ENCODE measurements at regions of chr11 and their contacts with region 1.

Region 1: DNA sequence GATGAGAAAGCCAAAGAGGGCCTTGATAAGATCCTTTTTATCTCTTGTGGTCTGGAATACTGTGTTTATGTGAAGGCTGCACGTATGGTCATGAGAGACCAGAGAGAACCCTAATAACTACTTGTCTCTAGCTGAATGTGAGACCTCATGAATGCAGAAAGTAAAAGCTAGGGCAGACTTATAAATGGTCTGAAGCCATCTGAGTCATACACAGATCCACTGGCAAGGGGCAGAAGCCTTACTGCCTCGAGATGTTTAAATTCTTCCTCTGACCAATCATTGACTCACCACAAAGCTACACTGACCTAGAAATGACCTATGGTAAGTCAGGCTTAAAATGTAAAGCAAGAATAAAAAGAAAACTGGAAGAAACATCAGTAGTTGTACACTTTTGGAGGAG is 22.7 kb upstream of the OR4B1 start:
- DNase-seq: no peak
- ATAC-seq: no peak
- H3K4me3 ChIP-seq: no peak overlapping the region
- H3K27ac ChIP-seq: no peak overlapping the region
- H3K4me1 ChIP-seq: no peaks in the 10 kb centered on the region
- H3K27me3 ChIP-seq: no peaks in the 10 kb centered on the region
- CTCF ChIP-seq: no peak

Region 2: GRCh38 chr11:48028914-48029680 is 164.8 kb before region 1 on chr11:
- CTCF ChIA-PET with region 1: no interaction called
- POLR2A ChIA-PET with region 1: interaction called, 11 read pairs
- in situ Hi-C with region 1: no loop called
- intact Hi-C with region 1: no loop called
- DNase-seq: no peak
- ATAC-seq: no peak
- H3K4me3 ChIP-seq: no peak overlapping the region
- H3K27ac ChIP-seq: no peak overlapping the region
- H3K4me1 ChIP-seq: peaks cover 23% of the 10 kb centered on the region
- H3K27me3 ChIP-seq: no peaks in the 10 kb centered on the region
- CTCF ChIP-seq: no peak

Measured in Panc1 (cell line).